HCT116 (cell line): ENCODE measurements at regions of chr1 and their contacts with region 1.

Region 1: GRCh38 chr1:174344162-174344561 is 103.6 kb upstream of the GPR52 start:
- DNase-seq: no peak
- ATAC-seq: no peak
- H3K4me3 ChIP-seq: no peak overlapping the region
- H3K27ac ChIP-seq: no peak overlapping the region
- H3K4me1 ChIP-seq: no peaks in the 10 kb centered on the region
- H3K27me3 ChIP-seq: no peaks in the 10 kb centered on the region
- CTCF ChIP-seq: no peak
- POLR2A ChIP-seq: no peak
- RAD21 ChIP-seq: no peak

Region 2: GRCh38 chr1:174324939-174325338 is 19.2 kb before region 1 on chr1:
- CTCF ChIA-PET with region 1: no interaction called
- POLR2A ChIA-PET with region 1: no interaction called
- RAD21 ChIA-PET with region 1: no interaction called
- intact Hi-C with region 1: loop called (anchors 2 kb)
- DNase-seq: no peak
- ATAC-seq: no peak
- H3K4me3 ChIP-seq: no peak overlapping the region
- H3K27ac ChIP-seq: no peak overlapping the region
- H3K4me1 ChIP-seq: no peaks in the 10 kb centered on the region
- H3K27me3 ChIP-seq: no peaks in the 10 kb centered on the region
- CTCF ChIP-seq: no peak
- POLR2A ChIP-seq: no peak
- RAD21 ChIP-seq: no peak